ENCODE measurements at regions of chr20 and their contacts with region 1.

Region 1: GRCh38 chr20:21767739-21768223 is 62.3 kb downstream of the PAX1 start:
- DNase-seq: peak; percentile 34 to 96
- H3K4me3 ChIP-seq: peak overlapping the region; percentile 14 to 44 (median 24); a peak in 3 of 8 replicates
- H3K27ac ChIP-seq: no peak overlapping the region
- H3K4me1 ChIP-seq: peaks cover 0 to 3% (median under 1%) of the 10 kb centered on the region in 4 experiments; a peak in 1 of 7 replicates
- H3K27me3 ChIP-seq: peaks cover 0 to 6% (median 5%) of the 10 kb centered on the region in 4 experiments; a peak in 4 of 7 replicates
- CTCF ChIP-seq: peak; percentile 87 to 96 (median 87)
- EP300 ChIP-seq: no peak
- POLR2A ChIP-seq: no peak
- RAD21 ChIP-seq: peak; percentile 67 to 73

Region 2: GRCh38 chr20:21004386-21005076 is 763.2 kb before region 1 on chr20:
- CTCF ChIA-PET with region 1: no interaction called
- POLR2A ChIA-PET with region 1: no interaction called
- DNase-seq: no peak
- H3K4me3 ChIP-seq: no peak overlapping the region
- H3K27ac ChIP-seq: no peak overlapping the region
- H3K4me1 ChIP-seq: no peaks in the 10 kb centered on the region
- H3K27me3 ChIP-seq: no peaks in the 10 kb centered on the region
- CTCF ChIP-seq: no peak
- EP300 ChIP-seq: no peak
- POLR2A ChIP-seq: no peak
- RAD21 ChIP-seq: no peak

Region 3: GRCh38 chr20:21702553-21703470 is 65.0 kb before region 1 on chr20:
- CTCF ChIA-PET with region 1: interaction called, 14 read pairs
- POLR2A ChIA-PET with region 1: no interaction called
- DNase-seq: peak in 1 of 2 experiments; percentile 98
- H3K4me3 ChIP-seq: peak overlapping the region; percentile 1 to 52 (median 26); a peak in 7 of 8 replicates
- H3K27ac ChIP-seq: no peak overlapping the region
- H3K4me1 ChIP-seq: peaks cover 5 to 31% (median 18%) of the 10 kb centered on the region in 4 experiments
- H3K27me3 ChIP-seq: peaks cover 95 to 100% (median 99%) of the 10 kb centered on the region in 4 experiments
- CTCF ChIP-seq: peak; percentile 68 to 81 (median 77)
- EP300 ChIP-seq: no peak
- POLR2A ChIP-seq: no peak
- RAD21 ChIP-seq: peak; percentile 69 to 74

Region 4: GRCh38 chr20:21719592-21720214 is 48.1 kb before region 1 on chr20:
- CTCF ChIA-PET with region 1: interaction called, 43 read pairs
- POLR2A ChIA-PET with region 1: interaction called, 3 read pairs
- DNase-seq: peak in 1 of 2 experiments; percentile 81
- H3K4me3 ChIP-seq: no peak overlapping the region
- H3K27ac ChIP-seq: no peak overlapping the region
- H3K4me1 ChIP-seq: peaks cover 0 to 5% (median 2%) of the 10 kb centered on the region in 4 experiments; a peak in 3 of 7 replicates
- H3K27me3 ChIP-seq: peaks cover 23 to 44% (median 36%) of the 10 kb centered on the region in 4 experiments
- CTCF ChIP-seq: peak in 2 of 3 experiments; percentile 56 to 66; a peak in 2 of 4 replicates
- EP300 ChIP-seq: no peak
- POLR2A ChIP-seq: no peak
- RAD21 ChIP-seq: peak; percentile 51 to 55

Region 5: DNA sequence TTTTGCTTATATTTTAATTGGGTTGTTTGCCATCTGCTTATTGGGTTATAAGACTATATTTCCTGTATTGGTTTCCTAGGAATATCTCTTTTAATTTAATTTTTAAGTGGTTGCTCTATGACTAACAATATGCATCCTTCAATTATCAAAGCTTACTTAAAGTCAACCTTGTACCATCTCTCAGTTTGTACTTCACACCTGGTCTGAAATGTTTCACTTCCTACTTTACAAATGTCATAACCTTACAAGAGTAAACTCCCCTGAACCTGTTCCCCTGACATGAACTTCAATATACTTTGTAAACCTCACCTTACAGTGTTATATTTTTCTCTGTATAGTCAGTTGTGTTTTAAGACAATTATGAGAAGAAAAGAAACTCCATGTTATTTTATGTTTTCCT is 26.5 kb before region 1 on chr20:
- CTCF ChIA-PET with region 1: no interaction called
- POLR2A ChIA-PET with region 1: no interaction called
- DNase-seq: no peak
- H3K4me3 ChIP-seq: no peak overlapping the region
- H3K27ac ChIP-seq: no peak overlapping the region
- H3K4me1 ChIP-seq: no peaks in the 10 kb centered on the region
- H3K27me3 ChIP-seq: no peaks in the 10 kb centered on the region
- CTCF ChIP-seq: no peak
- EP300 ChIP-seq: no peak
- POLR2A ChIP-seq: no peak
- RAD21 ChIP-seq: no peak

Region 6: GRCh38 chr20:21755966-21756365 is 11.8 kb before region 1 on chr20:
- CTCF ChIA-PET with region 1: interaction called, 19 read pairs
- POLR2A ChIA-PET with region 1: no interaction called
- DNase-seq: no peak
- H3K4me3 ChIP-seq: no peak overlapping the region
- H3K27ac ChIP-seq: no peak overlapping the region
- H3K4me1 ChIP-seq: no peaks in the 10 kb centered on the region
- H3K27me3 ChIP-seq: no peaks in the 10 kb centered on the region
- CTCF ChIP-seq: no peak
- EP300 ChIP-seq: no peak
- POLR2A ChIP-seq: no peak
- RAD21 ChIP-seq: no peak

Region 7: GRCh38 chr20:21781446-21782075 is 13.8 kb after region 1 on chr20:
- CTCF ChIA-PET with region 1: interaction called, 17 read pairs
- POLR2A ChIA-PET with region 1: interaction called, 6 read pairs
- DNase-seq: no peak
- H3K4me3 ChIP-seq: no peak overlapping the region
- H3K27ac ChIP-seq: no peak overlapping the region
- H3K4me1 ChIP-seq: no peaks in the 10 kb centered on the region; a peak in 4 of 7 replicates
- H3K27me3 ChIP-seq: no peaks in the 10 kb centered on the region
- CTCF ChIP-seq: no peak
- EP300 ChIP-seq: no peak
- POLR2A ChIP-seq: no peak
- RAD21 ChIP-seq: no peak

Region 8: DNA sequence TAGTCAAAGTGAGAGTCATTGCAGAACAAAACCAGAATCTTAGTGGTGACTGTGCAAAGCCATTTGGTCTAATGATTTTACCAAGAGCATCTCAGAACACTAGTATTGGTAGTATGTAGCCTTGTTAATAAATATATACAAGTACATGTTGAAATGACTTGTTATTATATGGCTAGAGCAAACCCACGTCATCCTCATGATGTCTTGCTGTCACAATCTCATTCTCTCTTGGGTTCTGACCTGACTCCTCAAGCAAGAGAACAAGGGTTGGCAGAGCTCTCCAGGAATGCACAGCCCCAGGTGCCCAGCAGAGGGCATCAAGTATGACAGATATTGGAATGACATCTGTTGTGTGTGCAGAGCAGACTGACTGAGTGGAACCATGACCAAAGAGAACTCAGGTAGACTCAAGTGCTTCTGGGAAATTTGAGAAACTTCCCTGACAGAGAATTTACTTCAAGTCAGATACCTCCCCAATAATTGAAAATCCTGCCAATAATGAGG is 28.2 kb after region 1 on chr20:
- CTCF ChIA-PET with region 1: interaction called, 19 read pairs
- POLR2A ChIA-PET with region 1: no interaction called
- DNase-seq: no peak
- H3K4me3 ChIP-seq: no peak overlapping the region
- H3K27ac ChIP-seq: no peak overlapping the region
- H3K4me1 ChIP-seq: no peaks in the 10 kb centered on the region
- H3K27me3 ChIP-seq: no peaks in the 10 kb centered on the region
- CTCF ChIP-seq: peak; percentile 34 to 62 (median 48)
- EP300 ChIP-seq: no peak
- POLR2A ChIP-seq: no peak
- RAD21 ChIP-seq: peak; percentile 33 to 59; a peak in 3 of 4 replicates

Measured in H1 (cell line).